ENCODE measurements at regions of chr15 and their contacts with region 1.

Region 1: DNA sequence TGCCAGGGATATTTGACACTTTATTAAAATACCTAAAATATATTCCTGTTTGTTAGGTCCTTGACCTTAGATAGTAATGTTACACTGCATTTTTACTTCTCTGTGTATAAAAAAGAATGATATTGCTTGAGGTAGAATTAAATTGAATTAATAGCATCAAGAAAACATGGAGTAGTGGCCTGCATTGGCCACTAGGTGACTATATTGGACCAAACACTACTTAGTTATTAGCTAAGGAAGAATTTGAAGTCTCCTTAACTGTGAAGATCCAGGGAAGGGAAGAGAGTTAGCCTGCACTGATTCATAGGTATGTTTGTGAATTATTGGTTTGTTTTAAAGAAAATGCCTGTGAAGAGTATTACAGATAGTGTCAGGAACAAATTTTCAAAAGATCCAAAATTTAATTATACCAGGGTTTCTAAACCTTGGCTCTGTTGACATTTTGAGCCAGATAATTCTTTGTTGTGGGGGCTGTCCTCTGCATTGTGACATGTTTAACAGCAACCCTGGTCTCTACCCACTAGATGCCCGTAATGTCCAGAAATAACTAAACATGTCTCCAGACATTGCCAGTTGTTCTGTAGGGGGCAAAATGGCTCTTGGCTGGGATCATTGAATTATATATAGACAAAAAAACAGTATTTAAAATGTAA is 103.6 kb upstream of the THSD4 start:
- DNase-seq: peak; percentile 22
- H3K4me3 ChIP-seq: no peak overlapping the region
- H3K27me3 ChIP-seq: no peaks in the 10 kb centered on the region
- CTCF ChIP-seq: peak; percentile 81

Region 2: GRCh38 chr15:70722266-70723121 is 289.1 kb before region 1 on chr15:
- CTCF ChIA-PET with region 1: no interaction called
- POLR2A ChIA-PET with region 1: no interaction called
- DNase-seq: no peak
- H3K4me3 ChIP-seq: no peak overlapping the region
- H3K27me3 ChIP-seq: no peaks in the 10 kb centered on the region
- CTCF ChIP-seq: peak; percentile 68

Region 3: DNA sequence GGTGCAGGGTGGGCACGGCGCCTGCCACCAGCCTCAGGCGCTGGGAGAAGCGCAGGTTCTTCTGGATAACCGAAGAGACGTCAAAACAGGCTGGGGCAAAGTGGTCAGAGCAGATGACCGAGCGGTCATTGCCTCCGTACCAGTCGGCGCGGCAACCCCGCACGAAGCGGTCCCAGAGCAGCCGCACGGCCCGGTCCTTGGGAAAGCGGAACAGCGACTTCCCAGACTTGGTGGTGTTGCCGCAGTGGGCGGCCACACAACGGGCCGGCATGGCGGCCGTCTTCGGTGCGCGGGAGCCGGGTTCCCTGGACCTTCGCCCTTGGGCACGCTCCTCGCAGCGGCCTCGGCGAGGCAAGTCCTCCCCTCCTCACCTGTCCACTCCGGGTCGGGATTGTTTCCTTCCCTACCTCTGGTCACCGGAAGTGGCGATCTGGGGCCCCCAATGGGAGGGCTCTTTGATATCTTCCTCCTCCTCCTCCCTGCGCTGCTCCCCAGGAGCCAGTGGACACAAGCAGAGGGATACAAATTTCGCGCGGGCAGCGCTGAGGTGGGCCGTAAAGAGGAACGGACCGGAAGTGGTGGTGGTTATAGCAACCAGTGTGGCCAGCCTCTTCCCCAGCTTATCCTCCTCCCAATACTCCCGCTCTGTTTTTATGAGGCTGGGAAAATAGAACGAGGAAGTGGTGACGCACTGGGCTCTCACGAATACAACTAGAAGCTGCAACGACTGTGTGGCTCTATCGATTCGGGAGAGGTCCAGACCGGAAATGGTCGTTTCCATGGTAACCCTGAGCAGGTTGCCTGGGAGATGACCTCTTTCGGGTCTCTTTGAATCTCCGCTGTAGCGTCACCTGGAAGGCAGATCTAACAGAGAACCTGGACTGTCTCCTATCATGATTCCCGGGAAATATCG is 119.4 kb before region 1 on chr15 and contains the starts of genes LRRC49 and THAP10:
- CTCF ChIA-PET with region 1: interaction called, 10 read pairs
- POLR2A ChIA-PET with region 1: no interaction called
- DNase-seq: peak; percentile 93
- H3K4me3 ChIP-seq: peak within 1 kb of the TSS; percentile 81
- H3K27me3 ChIP-seq: no peaks in the 10 kb centered on the region
- CTCF ChIP-seq: no peak
- polyA plus RNA-seq, gene LRRC49: 6.2 and 8.6 TPM in 2 replicates
- polyA plus RNA-seq, gene THAP10: 2.8 and 3.8 TPM in 2 replicates

Region 4: DNA sequence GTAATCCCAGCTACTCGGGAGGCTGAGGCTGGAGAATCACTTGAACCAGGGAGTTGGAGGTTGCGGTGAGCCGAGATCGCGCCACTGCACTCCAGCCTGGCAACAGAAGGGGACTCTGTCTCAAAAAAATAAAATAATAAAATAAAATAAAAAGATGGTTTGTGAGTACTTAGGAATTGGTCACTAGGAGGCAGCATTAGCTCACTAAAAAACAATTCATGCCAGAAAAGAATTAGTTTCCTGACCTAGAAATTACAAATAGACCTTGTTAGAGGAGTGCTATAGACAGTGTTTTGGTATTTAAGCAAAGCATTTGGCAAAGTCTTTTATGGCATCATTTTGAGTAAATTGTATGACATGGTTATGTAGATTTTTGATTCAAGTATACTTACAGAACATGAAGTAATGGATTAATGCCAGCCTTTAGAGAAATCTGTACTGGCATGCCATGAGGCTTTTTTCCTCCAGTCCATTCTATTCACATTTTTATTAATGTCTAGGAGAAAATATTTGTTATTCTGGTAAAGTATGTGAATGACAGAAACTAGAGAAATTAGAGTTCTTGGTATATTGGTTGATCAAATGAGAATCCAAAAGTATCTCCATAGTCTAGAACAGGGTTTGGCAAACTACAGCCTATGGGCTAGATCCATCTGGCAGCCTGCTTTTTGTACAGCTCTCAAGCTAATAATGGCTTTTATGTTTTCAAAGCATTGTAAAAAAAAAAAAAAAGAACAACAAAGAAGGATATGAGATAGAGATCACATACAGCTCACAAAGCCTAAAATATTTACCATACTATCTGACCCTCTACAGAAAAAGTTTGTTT is 37.4 kb before region 1 on chr15:
- CTCF ChIA-PET with region 1: interaction called, 15 read pairs
- POLR2A ChIA-PET with region 1: no interaction called
- DNase-seq: peak; percentile 24
- H3K4me3 ChIP-seq: no peak overlapping the region
- H3K27me3 ChIP-seq: no peaks in the 10 kb centered on the region
- CTCF ChIP-seq: peak; percentile 50

Region 5: DNA sequence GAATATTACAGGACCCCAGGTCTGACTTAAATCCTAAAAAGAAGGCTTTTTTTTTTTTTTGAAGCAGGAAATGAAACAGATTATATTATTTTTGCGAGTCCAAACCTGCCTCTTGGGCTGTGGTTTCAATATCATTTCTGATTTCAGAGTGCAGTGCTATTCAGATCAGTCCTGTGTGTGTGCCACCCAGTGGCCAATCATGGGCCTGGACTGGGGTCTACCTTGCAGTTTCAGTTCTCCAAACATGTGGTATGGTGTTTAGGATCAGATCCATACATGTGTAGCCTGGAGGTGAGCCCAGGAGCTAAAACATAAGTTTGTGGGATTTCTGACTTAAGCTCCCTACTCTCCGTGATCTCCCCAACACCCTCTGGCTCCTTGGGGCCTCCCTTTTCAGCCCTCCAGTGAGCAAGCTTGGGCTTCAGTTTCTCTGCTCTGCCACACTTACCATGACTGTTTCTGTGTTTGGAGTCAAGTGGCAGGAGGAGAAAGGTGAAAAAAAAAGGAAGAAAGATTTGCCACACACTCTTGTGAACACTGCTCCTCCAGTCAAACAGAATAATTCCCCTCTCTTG is 91.6 kb after region 1 on chr15:
- CTCF ChIA-PET with region 1: interaction called, 53 read pairs
- POLR2A ChIA-PET with region 1: no interaction called
- DNase-seq: no peak
- H3K4me3 ChIP-seq: no peak overlapping the region
- H3K27me3 ChIP-seq: no peaks in the 10 kb centered on the region
- CTCF ChIP-seq: peak; percentile 71

Region 6: GRCh38 chr15:71109130-71109529 is 97.5 kb after region 1 on chr15:
- CTCF ChIA-PET with region 1: interaction called, 53 read pairs
- POLR2A ChIA-PET with region 1: no interaction called
- DNase-seq: peak; percentile 51
- H3K4me3 ChIP-seq: no peak overlapping the region
- H3K27me3 ChIP-seq: no peaks in the 10 kb centered on the region
- CTCF ChIP-seq: peak; percentile 49

Region 7: DNA sequence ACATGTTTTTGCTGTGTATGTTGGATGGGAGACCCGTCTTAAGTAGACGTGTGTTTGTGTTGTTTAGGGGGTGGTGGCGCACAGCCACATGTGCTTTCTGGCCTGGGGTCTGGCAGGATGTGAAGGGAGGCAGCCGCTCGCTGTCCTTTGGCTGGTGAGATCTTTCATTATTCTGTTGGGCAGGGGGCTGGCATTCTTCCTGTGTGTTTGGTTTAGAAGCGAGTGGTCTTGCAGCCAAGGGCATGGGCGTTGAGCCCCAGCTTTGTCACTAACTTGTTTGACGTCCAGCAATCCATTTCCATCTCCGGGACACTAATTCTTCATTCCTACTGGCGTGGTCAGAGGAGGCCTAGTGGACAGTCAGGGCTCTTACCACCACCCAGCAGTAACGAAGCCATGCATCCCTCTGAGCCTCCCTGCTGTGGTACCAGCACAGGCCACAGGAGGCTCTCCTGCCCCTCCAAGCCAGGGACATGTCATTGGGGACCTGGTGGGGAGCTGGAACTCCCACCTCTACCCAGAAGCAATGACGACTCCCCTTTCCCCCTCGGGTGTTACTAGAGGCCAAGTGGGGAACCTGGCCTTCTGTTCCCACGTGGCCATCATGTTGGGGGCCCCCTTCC is 114.3 kb after region 1 on chr15:
- CTCF ChIA-PET with region 1: no interaction called
- POLR2A ChIA-PET with region 1: no interaction called
- DNase-seq: no peak
- H3K4me3 ChIP-seq: no peak overlapping the region
- H3K27me3 ChIP-seq: no peaks in the 10 kb centered on the region
- CTCF ChIP-seq: peak; percentile 31; the same call in 1 of the 2 replicates

Measured in BJ (cell line).